GM10248 (cell line): ENCODE measurements at regions of chr1 and their contacts with region 1.

Region 1: DNA sequence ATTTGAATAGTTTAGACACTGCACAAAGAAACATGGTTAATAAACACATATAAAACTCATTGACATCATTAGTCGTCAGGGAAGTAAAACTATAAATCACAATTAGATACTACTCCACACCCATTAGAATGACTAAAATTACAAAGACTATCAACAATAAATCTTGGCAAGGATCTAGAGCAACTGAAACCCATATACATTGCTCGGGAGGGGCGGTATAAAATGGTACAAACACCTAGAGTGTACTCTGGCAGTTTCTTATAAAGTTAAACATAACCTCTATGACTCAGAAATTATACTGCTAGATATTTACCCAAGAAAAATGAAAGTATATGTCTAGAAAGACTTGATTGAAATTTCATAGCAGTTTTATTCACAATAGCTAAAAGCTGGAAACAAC is 434.2 kb downstream of the RWDD3 start:
- DNase-seq: no peak
- CTCF ChIP-seq: no peak

Region 2: DNA sequence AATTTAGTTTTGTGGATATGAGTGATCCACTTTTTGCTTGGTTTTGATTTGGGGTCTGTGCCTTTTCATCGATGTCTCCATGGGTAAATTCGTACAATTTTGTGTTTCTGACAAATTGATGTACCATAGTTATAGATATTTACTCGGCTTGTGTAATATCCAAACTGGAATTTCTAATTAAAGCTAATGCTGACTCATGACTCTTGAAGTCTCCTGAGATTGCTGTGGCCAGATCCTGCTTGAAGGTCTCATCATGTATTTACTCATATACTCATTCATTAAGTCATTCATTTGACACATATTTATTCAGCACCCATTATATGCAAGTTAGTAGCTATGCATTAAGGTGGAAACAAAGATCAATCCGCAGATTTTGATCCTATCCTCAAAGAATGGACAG is 10.9 kb before region 1 on chr1:
- CTCF ChIA-PET with region 1: interaction called, 10 read pairs
- POLR2A ChIA-PET with region 1: no interaction called
- DNase-seq: no peak
- CTCF ChIP-seq: no peak

Region 3: DNA sequence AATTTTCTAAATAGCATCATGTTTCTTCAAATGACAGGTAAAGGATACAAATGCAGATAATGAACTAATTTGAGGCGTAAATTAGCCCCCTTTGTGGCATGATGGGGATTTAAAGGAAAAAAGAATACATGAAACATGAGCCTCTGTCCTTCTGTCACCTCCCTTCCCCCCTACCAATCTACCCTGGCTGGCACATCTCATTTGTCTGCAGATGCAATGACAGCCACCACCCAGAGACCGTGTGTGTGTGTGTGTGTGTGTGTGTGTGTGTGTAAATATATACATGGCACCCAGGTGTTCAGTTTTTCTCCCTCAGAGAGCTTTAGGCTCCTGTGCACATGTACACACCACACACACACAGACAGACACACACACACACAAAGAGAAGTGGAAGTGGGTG is 16.9 kb after region 1 on chr1:
- CTCF ChIA-PET with region 1: no interaction called
- POLR2A ChIA-PET with region 1: no interaction called
- DNase-seq: no peak
- CTCF ChIP-seq: no peak